ENCODE measurements at regions of chr14 and their contacts with region 1.

Region 1: GRCh38 chr14:49767562-49768300 is at the start of gene KLHDC2:
- DNase-seq: peak; percentile 86 to 91
- H3K4me3 ChIP-seq: peak within 1 kb of the TSS; percentile 65
- H3K4me1 ChIP-seq: peaks cover 19% of the 10 kb centered on the region
- H3K27me3 ChIP-seq: no peaks in the 10 kb centered on the region

Region 2: GRCh38 chr14:49633640-49634546 is 133.8 kb before region 1 on chr14:
- in situ Hi-C with region 1: loop called (anchors 5 kb)
- DNase-seq: peak; percentile 91 to 95
- H3K4me3 ChIP-seq: peak overlapping the region; percentile 88
- H3K4me1 ChIP-seq: peaks cover 23% of the 10 kb centered on the region
- H3K27me3 ChIP-seq: no peaks in the 10 kb centered on the region

Region 3: DNA sequence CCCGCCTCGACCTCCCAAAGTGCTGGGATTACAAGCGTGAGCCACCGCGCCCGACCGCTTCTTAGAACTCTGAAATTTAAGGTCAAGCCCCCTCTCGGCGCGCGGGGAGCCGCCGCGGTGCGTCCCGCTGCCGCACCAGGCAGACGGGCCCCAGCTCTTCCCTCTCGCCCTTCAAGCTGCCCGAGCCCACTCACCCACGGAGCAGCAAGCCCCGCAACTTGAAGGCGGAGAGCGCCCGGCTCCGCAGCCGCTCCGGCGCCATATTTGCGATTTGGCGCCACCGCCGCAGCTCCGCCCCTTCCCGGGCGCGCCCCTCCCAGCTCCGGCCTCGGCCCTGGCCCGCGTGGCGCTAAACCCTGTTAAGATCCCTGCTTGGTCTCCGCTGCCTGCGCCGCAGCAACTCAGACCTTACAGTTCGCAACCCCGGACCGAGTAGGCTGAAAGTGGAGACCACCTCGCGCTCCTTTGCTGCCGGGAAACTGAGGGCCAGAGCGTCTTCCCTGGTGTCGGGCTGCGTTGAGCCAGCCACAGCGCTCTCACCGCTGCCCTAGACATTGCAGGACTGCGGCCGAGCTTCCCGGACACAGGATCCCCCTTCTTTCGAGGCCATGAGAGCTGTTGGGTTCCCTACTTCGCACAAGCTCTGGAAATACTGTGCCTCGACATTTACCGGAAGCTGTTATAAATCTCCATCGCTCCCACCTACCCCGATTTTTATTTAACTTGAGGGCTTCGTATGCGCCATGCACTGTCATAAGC is 79.6 kb before region 1 on chr14 and contains the start of gene POLE2:
- in situ Hi-C with region 1: loop called (anchors 5 kb)
- DNase-seq: peak; percentile 80 to 89
- H3K4me3 ChIP-seq: peak within 1 kb of the TSS; percentile 89
- H3K4me1 ChIP-seq: peaks cover 23% of the 10 kb centered on the region
- H3K27me3 ChIP-seq: no peaks in the 10 kb centered on the region

Region 4: DNA sequence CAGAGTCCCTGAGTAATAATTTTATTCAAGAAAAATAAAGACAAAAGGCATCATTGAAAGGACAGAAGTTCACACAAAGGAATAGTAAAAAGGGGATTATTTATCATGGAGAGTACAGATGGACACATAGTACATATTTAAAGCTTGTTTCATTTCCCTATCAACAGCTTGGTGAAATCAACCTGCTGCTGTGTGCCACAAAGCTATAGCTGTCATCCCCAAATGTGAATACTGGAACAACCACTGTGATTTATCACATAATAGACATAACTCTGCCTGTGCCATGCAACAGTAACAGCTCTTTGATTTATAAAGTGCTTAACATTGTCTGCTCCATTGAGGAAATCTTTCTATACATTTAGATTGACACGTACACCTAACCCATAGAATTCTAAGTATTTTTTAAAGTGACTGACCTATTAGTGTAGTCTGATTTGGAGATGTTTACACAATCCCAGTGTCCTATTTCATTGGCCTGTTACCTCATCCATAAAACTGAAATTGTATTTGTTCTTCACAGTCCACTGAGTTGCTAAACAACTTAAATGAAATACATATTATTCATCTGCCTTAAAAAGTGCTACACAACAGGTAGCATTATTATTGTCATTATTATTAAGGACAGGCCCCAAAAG is 81.6 kb after region 1 on chr14:
- in situ Hi-C with region 1: loop called (anchors 10 kb)
- DNase-seq: no peak
- H3K4me3 ChIP-seq: no peak overlapping the region
- H3K4me1 ChIP-seq: peaks cover 7% of the 10 kb centered on the region; the same call in 1 of the 2 replicates
- H3K27me3 ChIP-seq: no peaks in the 10 kb centered on the region